ENCODE measurements at regions of chr6 and their contacts with region 1.

Region 1: GRCh38 chr6:31739639-31740396 is at the start of gene MSH5:
- DNase-seq: peak; percentile 99
- H3K4me3 Mint-ChIP-seq: peak within 1 kb of the TSS; percentile 94
- H3K27ac Mint-ChIP-seq: peak within 1 kb of the TSS; percentile 91
- H3K4me1 Mint-ChIP-seq: peaks cover 48% of the 10 kb centered on the region
- H3K27me3 Mint-ChIP-seq: no peaks in the 10 kb centered on the region
- total RNA-seq, gene MSH5: 80.9 to 83.8 TPM

Region 2: DNA sequence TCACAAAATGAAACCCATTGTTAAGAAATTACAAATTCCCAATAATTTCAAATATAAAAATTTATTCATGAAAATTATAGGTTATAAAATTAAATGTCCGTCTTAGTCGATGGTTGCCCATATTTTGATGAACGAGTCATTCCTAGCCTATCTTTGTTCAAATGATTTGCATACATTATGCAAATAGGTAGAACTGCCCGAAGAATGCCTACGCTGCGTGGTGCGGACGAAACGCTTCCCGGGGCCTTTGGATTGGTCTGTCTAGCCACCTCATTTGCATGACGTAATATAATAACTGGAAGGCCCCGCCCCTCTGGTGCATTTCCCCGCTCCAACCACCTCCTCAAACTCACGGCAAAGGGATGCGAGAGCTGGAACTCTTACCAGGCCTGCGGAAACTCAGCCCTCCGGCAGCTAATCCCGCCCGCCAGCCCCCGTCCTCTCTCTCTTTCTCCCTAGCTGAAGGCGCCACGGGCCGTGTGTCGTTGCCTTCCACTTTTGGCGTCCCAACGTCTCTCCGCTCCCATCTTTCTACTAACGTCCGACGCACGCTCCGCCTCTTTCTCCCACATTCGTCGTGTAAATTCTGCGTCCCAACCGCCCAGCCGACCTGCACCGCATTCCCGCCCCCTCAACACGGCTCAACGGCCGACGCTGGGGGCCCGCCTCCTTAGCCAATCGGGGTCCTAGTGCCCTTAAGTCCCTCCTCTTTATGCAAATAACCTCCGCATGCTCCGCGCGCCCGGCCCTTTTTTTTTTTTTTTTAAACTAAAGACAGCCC is 119.8 kb before region 1 on chr6:
- CTCF ChIA-PET with region 1: no interaction called
- POLR2A ChIA-PET with region 1: no interaction called
- intact Hi-C with region 1: loop called (anchors 1 kb)
- DNase-seq: peak; percentile 98
- H3K4me3 Mint-ChIP-seq: peak overlapping the region; percentile 91
- H3K27ac Mint-ChIP-seq: peak overlapping the region; percentile 98
- H3K4me1 Mint-ChIP-seq: peaks cover 47% of the 10 kb centered on the region
- H3K27me3 Mint-ChIP-seq: no peaks in the 10 kb centered on the region

Region 3: DNA sequence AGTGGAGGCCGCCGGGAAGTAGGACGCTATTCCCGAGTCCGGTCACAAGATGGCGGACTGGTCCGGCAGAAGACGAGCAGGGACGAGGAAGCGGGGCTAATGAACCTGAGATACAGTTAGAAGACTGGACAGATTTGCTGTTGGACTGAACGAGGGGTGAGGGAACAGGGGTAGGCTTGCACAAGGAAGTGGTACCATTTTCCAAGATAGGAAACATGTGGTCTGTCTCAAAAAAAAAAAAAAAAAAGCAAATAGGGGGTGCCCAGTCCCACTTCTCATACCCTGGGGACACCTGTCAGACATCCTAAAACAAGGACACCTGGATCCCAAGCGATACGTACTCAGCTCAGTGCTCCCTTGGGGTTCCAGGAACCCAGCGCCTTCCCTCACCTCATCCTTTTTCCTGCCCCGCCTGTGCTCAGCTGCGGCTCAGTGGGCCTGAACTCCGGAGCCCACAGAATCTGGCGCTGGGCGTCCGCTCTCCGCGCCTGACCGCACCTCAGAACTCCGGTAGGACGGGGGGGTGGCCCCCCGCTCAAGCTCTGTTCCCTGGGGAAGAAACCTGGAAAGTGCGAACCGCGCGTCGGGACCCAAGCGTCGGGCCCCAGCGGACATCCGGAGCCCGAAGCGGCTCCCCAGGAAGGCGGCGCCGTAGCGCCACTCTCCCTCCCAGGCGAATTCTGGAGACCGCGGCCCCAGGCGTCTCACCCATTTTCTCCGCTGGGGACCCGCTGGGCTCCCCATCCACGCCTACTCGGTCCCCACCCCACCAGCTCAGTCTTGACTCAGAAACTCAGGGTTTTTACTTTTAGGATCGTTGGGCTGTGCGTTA is 58.8 kb before region 1 on chr6 and contains the start of gene LY6G5C:
- CTCF ChIA-PET with region 1: interaction called, 4 read pairs
- POLR2A ChIA-PET with region 1: no interaction called
- intact Hi-C with region 1: loop called (anchors 2 kb)
- DNase-seq: peak; percentile 82
- H3K4me3 Mint-ChIP-seq: peak within 1 kb of the TSS; percentile 76
- H3K27ac Mint-ChIP-seq: peak within 1 kb of the TSS; percentile 44
- H3K4me1 Mint-ChIP-seq: peaks cover 15% of the 10 kb centered on the region
- H3K27me3 Mint-ChIP-seq: no peaks in the 10 kb centered on the region
- total RNA-seq, gene LY6G5C: 1.4 to 1.8 TPM

Region 4: DNA sequence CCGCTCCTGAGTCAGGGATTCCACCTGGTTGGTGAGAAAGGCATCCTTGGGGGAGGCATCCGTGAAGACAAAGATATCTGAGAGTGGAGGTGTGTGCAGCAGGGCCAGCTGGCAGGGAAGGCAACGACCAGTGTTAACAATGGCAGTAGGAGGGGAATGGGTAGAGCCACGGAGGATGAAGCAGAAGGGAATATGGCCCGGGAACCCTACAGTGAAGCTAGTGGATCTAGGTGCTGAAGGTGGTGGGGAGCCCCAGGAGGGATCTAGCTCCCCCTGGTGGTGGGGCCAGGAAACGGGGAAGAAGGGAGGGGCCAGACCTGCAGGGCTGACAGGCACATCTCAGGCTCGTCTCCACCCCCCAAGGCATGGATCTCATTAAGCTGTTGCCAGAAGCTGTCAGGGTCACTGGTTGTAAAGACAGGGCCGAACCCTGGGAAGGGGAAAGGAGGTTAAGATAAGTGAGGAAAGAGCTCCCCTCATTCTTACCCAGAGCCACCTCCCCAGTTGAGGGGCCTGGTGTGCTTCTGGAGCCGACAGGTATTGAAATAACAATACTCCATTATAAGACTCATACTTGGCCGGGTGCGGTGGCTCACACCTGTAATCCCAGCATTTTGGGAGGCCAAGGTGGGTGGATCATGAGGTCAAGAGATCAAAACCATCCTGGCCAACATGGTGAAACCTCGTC is 30.0 kb after region 1 on chr6:
- CTCF ChIA-PET with region 1: interaction called, 67 read pairs
- POLR2A ChIA-PET with region 1: no interaction called
- intact Hi-C with region 1: loop called (anchors 2 kb)
- DNase-seq: peak; percentile 90
- H3K4me3 Mint-ChIP-seq: no peak overlapping the region
- H3K27ac Mint-ChIP-seq: peak overlapping the region; percentile 25
- H3K4me1 Mint-ChIP-seq: peaks cover 21% of the 10 kb centered on the region
- H3K27me3 Mint-ChIP-seq: no peaks in the 10 kb centered on the region

Region 5: GRCh38 chr6:31827286-31828079 is 87.7 kb after region 1 on chr6 and contains the start of gene HSPA1B:
- CTCF ChIA-PET with region 1: interaction called, 18 read pairs
- POLR2A ChIA-PET with region 1: interaction called, 15 read pairs
- intact Hi-C with region 1: loop called (anchors 2 kb)
- DNase-seq: peak; percentile 98
- H3K4me3 Mint-ChIP-seq: peak within 1 kb of the TSS; percentile 86
- H3K27ac Mint-ChIP-seq: peak within 1 kb of the TSS; percentile 98
- H3K4me1 Mint-ChIP-seq: peaks cover 43% of the 10 kb centered on the region
- H3K27me3 Mint-ChIP-seq: no peaks in the 10 kb centered on the region
- total RNA-seq, gene HSPA1B: 59.5 to 62.3 TPM

Measured in activated CD4-positive, alpha-beta memory T cell treated with anti-CD3 and anti-CD28 coated beads for 36 hours (primary cell).